ENCODE measurements at regions of chr3 and their contacts with region 1.

Region 1: DNA sequence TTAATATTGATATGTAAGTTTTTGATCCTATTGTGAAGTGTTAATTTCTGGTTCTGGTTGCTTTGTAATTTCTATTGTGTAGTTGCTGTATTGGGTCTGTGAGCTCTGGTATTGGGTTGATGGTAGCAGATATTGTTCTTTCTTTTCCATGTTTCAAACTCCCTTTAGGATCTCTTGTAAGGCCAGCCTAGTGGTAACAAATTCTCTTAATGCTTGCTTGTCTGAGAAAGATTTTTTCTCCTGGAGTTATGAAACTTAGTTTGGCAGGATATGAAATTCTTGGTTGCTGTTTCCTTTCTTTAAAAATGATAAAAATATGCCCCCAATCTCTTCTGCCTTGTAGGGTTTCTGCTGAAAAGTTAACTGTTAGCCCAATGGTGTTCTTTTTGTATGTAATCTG is 268.6 kb upstream of the PLSCR5 start:
- DNase-seq: no peak
- ATAC-seq: no peak

Region 2: DNA sequence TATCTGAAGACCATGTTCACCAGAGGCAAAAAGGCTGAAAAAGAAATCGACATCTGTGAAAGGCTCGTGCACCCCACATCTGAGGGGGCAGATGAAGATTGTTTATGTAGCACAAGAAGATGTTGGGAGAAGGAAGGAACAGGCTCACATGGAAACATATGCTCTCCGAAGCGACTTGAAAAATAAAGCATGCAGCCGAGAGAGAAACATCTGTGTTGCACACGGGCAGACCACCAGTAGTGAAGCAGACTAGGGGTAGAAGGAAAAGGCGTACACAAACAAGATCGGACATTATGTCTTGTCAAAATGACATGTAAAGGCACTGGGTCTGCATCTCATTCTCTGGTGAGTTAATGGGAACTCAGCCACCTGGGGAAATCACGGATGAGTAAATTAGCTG is 176.1 kb after region 1 on chr3:
- intact Hi-C with region 1: loop called (anchors 10 kb)
- DNase-seq: no peak
- ATAC-seq: no peak

Measured in Right ventricle myocardium superior (tissue), 1 donor.